Ovary (tissue), 10 donors: ENCODE measurements at regions of chr1 and their contacts with region 1.

Region 1: GRCh38 chr1:37317870-37318467 is 156.4 kb upstream of the ZC3H12A start:
- DNase-seq: no peak
- H3K4me3 ChIP-seq: no peak overlapping the region
- H3K27ac ChIP-seq: no peak overlapping the region
- H3K4me1 ChIP-seq: no peaks in the 10 kb centered on the region
- H3K27me3 ChIP-seq: no peaks in the 10 kb centered on the region
- CTCF ChIP-seq: no peak
- EP300 ChIP-seq: no peak
- POLR2A ChIP-seq: no peak

Region 2: DNA sequence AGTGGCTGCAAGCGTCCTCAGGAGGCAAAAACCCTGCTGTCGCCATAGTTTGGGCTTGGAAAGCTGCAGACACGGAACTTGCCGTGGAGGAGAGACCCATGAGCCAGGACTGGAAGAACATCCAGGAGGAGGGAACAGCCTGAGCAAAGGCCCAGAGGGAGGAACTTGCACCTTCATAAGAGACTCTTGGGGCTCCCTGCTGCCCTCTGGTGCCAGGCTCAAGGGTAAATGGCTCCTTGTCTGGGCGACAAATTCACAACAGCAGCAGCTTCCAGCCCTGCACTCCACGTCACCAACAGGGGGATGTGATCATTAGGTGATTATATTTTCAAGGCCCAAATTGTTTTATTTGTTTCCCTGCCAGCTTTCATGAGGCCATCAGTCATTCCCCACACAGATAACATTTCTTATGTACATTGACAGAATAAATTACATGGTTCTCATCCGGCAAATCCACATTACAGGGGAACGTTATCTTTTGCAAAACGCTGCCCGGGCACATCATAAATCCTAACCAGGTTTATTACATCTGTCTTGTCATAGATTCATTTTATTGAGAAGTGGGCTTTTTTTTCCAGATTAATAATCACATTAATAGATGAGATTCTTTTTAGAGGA is 140.6 kb before region 1 on chr1:
- intact Hi-C with region 1: no loop called
- DNase-seq: no peak
- H3K4me3 ChIP-seq: no peak overlapping the region
- H3K27ac ChIP-seq: no peak overlapping the region
- H3K4me1 ChIP-seq: no peaks in the 10 kb centered on the region
- H3K27me3 ChIP-seq: no peaks in the 10 kb centered on the region
- CTCF ChIP-seq: no peak
- EP300 ChIP-seq: no peak
- POLR2A ChIP-seq: no peak

Region 3: DNA sequence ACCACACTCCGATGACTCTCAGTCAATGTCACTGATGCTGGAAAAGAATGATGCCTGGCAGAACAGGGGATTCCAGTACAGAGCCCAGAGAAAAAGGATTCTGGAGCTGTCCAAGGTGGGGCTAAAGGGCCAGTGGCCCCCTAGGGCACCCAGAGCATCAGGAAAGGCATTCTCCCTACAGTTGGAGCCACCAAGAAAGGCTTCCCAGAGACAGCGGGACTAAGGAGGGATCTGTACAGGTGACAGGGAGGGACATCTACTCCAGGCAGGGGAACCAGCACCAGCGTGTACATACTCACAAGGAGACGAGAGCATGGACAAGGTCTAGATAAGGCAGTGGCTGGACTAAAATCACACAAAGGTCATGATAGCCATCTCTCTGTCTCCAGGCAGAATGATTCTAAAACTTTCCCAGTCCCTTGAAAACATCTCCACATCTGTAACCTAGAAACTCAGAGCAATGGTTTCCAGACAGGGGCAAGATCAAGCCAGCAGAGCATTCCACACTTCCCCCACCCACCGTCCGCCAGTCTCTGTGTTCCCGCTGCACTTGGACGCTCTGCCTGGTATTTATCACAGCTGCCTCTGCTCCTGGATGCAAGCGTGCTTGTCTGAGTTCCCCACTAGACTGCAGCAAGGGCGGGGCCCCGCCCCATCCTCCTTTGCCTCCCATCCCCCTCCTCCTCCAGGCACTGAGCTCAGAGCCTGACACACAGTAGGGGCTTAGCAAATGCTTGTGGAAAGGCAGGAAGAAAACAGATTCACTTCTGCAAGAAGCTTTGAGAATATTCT is 44.8 kb after region 1 on chr1:
- intact Hi-C with region 1: loop called in 1 of 4 experiments (anchors 1 kb)
- DNase-seq: no peak
- H3K4me3 ChIP-seq: no peak overlapping the region
- H3K27ac ChIP-seq: no peak overlapping the region
- H3K4me1 ChIP-seq: no peaks in the 10 kb centered on the region
- H3K27me3 ChIP-seq: no peaks in the 10 kb centered on the region
- CTCF ChIP-seq: no peak
- EP300 ChIP-seq: no peak
- POLR2A ChIP-seq: no peak

Region 4: DNA sequence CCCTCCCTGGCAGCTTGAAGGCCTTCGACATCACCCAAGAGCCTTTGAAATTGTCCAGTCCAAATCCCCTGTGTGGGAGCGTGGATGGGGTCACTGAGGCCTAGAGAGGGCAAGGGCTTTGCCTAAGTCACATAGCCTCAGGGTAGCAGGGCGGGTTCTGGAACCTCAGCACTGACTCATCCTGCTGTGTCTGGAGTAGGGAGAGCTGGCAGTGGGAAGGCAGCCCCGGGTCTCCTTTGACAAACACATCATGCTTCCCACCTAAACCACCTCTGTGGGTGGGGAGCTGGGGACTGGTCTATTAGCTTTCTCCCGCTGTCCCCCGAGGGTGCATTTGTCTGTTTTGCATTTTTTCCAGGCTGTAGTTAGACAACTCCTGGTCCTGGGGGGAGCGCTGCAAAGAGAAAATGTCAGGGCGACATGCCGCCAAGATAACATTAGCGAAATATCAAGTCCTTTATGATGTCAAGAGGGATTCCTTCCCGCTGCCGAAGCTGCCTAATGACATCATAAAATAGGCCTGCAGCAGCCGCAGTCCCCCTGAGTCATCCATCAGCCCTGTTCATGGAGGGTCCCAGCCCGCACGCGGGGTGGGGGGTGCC is 805.5 kb after region 1 on chr1:
- intact Hi-C with region 1: no loop called
- DNase-seq: no peak
- H3K4me3 ChIP-seq: no peak overlapping the region
- H3K27ac ChIP-seq: no peak overlapping the region
- H3K4me1 ChIP-seq: no peaks in the 10 kb centered on the region
- H3K27me3 ChIP-seq: no peaks in the 10 kb centered on the region
- CTCF ChIP-seq: no peak
- EP300 ChIP-seq: no peak
- POLR2A ChIP-seq: no peak